Activated CD8-positive, alpha-beta memory T cell treated with anti-CD3 and anti-CD28 coated beads, Interleukin-2, amount 10 ng/mL, durations not matched to agents 7 days and 5 days (primary cell): ENCODE measurements at regions of chr10 and their contacts with region 1.

Region 1: DNA sequence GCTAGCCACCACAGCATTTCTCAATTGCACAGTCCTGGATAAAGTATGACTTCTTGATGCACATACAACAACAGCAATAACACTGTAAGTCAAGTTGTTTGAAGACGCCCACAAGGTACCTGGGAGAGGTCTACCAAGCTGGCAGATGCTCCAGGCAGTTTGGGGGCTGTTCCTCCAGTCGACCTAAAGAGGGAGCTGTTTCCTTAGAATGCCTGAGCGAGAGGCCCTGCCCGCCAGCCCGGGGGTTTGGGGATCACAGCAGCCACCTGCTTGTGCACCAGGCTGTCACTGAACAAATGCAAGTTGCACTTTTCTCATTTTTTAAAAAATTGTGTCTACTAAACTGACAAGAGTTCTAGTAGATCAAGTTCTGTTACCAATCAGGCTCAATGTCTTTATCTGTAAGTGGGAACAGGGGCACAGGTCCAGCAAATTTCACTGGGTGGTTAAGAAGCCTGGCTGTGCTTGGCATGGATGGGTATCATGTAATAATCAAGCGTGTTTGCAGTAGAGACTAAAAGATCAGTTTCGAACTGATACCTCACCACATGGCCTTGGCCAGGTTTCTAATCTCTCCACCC is 193.8 kb upstream of the ADO start:
- DNase-seq: peak; percentile 76
- ATAC-seq: peak; percentile 49
- H3K4me3 Mint-ChIP-seq: no peak overlapping the region
- H3K27ac Mint-ChIP-seq: no peak overlapping the region
- H3K4me1 Mint-ChIP-seq: peaks cover 28% of the 10 kb centered on the region
- H3K27me3 Mint-ChIP-seq: peaks cover 33% of the 10 kb centered on the region

Region 2: GRCh38 chr10:62502995-62503613 is 107.6 kb before region 1 on chr10:
- CTCF ChIA-PET with region 1: no interaction called
- DNase-seq: no peak
- ATAC-seq: no peak
- H3K4me3 Mint-ChIP-seq: no peak overlapping the region
- H3K27ac Mint-ChIP-seq: no peak overlapping the region
- H3K4me1 Mint-ChIP-seq: no peaks in the 10 kb centered on the region
- H3K27me3 Mint-ChIP-seq: peaks cover 20% of the 10 kb centered on the region

Region 3: GRCh38 chr10:62545160-62546066 is 65.3 kb before region 1 on chr10:
- CTCF ChIA-PET with region 1: no interaction called
- DNase-seq: no peak
- ATAC-seq: no peak
- H3K4me3 Mint-ChIP-seq: no peak overlapping the region
- H3K27ac Mint-ChIP-seq: no peak overlapping the region
- H3K4me1 Mint-ChIP-seq: no peaks in the 10 kb centered on the region
- H3K27me3 Mint-ChIP-seq: peaks cover 23% of the 10 kb centered on the region

Region 4: GRCh38 chr10:62623223-62623622 is 12.5 kb after region 1 on chr10:
- CTCF ChIA-PET with region 1: interaction called, 12 read pairs
- DNase-seq: no peak
- ATAC-seq: no peak
- H3K4me3 Mint-ChIP-seq: no peak overlapping the region
- H3K27ac Mint-ChIP-seq: no peak overlapping the region
- H3K4me1 Mint-ChIP-seq: peaks cover 22% of the 10 kb centered on the region
- H3K27me3 Mint-ChIP-seq: peaks cover 8% of the 10 kb centered on the region

Region 5: DNA sequence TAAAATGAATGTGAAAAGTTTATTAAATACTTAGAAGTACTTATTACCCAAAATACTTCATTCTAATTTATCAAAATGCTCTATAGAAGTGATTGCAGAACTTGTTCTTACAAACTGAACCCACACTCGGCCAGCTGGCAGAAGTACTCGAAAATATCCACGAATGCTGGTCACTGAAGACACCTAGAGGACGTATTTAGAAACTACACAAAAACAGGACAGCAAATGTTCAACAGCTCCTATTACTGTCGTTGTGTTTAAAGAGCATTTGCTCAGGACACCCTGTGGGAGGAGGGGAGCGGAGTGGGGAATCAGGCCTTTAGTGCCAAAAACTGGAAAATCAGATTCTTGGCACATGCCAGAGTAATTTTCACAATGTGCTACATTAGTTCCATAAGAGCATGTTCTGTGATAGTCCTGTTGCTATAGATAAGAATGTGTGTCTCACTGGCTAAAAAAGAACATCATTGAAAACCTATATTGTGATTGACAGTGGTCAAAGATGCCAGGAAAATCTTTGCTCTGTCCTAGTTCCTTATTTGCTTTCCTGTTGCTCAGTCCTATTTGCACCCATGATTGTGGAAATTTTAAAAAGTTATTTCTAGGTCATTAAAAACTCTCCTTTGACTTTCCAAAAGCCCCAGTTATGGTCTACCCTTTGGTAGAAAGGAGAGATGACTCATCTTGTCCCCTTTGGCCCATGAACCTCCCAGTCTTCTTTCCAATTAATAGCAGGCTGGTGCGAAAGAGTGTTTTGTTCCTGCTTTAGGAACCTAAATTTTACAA is 473.4 kb after region 1 on chr10:
- CTCF ChIA-PET with region 1: interaction called, 12 read pairs
- DNase-seq: peak; percentile 53
- ATAC-seq: peak; percentile 66
- H3K4me3 Mint-ChIP-seq: no peak overlapping the region
- H3K27ac Mint-ChIP-seq: no peak overlapping the region
- H3K4me1 Mint-ChIP-seq: no peaks in the 10 kb centered on the region
- H3K27me3 Mint-ChIP-seq: peaks cover 43% of the 10 kb centered on the region